ENCODE measurements at regions of chr3 and their contacts with region 1.

Region 1: DNA sequence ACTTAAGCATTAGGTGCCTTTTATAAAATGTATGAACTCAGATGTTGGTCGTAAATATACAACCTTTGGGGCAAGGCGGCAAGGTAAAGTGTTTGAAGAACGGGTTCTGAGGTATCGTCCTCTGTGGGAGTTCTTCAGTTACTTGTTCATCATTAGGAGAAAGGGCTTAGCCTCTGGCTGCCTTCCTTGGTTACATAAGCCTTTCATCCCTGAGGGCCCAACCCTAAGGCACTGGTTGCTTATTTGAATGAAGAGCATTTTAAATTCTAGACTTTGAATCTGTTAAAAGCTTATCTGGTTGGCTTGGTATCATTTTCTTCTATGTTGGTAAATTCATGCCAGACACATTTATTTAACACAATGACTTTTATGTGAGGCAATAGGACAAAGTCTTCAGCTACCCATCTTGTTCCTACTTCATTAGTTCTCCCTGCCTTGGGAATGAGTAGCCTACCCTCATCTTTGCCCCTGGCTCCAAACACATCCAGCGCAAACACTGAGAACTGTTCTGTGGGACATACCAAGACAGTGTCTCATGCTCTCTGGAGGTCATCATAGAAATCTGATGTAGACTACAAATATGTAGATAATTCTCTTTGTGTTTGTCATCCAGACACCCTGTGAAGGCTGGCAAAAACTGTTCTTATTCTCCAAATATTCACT is 12.4 kb upstream of the CCDC80 start:
- DNase-seq: peak; percentile 98
- ATAC-seq: peak; percentile 86
- H3K4me3 ChIP-seq: no peak overlapping the region
- H3K27ac ChIP-seq: peak overlapping the region; percentile 95
- H3K4me1 ChIP-seq: peaks cover 19% of the 10 kb centered on the region
- H3K27me3 ChIP-seq: no peaks in the 10 kb centered on the region
- CTCF ChIP-seq: no peak
- POLR2A ChIP-seq: peak; percentile 60; the same call in 1 of the 2 replicates
- RAD21 ChIP-seq: peak; percentile 27; the same call in 1 of the 2 replicates

Region 2: GRCh38 chr3:112676659-112677234 is 23.4 kb after region 1 on chr3:
- CTCF ChIA-PET with region 1: interaction called, 5 read pairs
- POLR2A ChIA-PET with region 1: interaction called, 5 read pairs
- dilution Hi-C with region 1: no loop called
- in situ Hi-C with region 1: no loop called
- intact Hi-C with region 1: loop called (anchors 1 kb)
- DNase-seq: peak; percentile 99
- ATAC-seq: peak; percentile 88
- H3K4me3 ChIP-seq: no peak overlapping the region
- H3K27ac ChIP-seq: peak overlapping the region; percentile 88
- H3K4me1 ChIP-seq: peaks cover 27% of the 10 kb centered on the region
- H3K27me3 ChIP-seq: no peaks in the 10 kb centered on the region
- CTCF ChIP-seq: no peak
- POLR2A ChIP-seq: no peak
- RAD21 ChIP-seq: peak; percentile 31

Region 3: GRCh38 chr3:112685420-112685819 is 32.1 kb after region 1 on chr3:
- CTCF ChIA-PET with region 1: no interaction called
- POLR2A ChIA-PET with region 1: interaction called, 4 read pairs
- dilution Hi-C with region 1: no loop called
- in situ Hi-C with region 1: loop called (anchors 5 kb)
- intact Hi-C with region 1: loop called (anchors 5 kb)
- DNase-seq: peak; percentile 96
- ATAC-seq: peak; percentile 87
- H3K4me3 ChIP-seq: no peak overlapping the region
- H3K27ac ChIP-seq: peak overlapping the region; percentile 4; the same call in 1 of the 2 replicates
- H3K4me1 ChIP-seq: peaks cover 36% of the 10 kb centered on the region
- H3K27me3 ChIP-seq: no peaks in the 10 kb centered on the region
- CTCF ChIP-seq: no peak
- POLR2A ChIP-seq: no peak
- RAD21 ChIP-seq: peak; percentile 8; the same call in 1 of the 2 replicates